Common myeloid progenitor, CD34-positive (primary cell): ENCODE measurements at regions of chr20 and their contacts with region 1.

Region 1: GRCh38 chr20:58938541-58938940 is 42.5 kb upstream of the NELFCD start:
- DNase-seq: peak; percentile 38 to 81 (median 72)
- H3K4me3 ChIP-seq: no peak overlapping the region
- H3K27ac ChIP-seq: no peak overlapping the region
- H3K4me1 ChIP-seq: peaks cover 0 to 13% (median 2%) of the 10 kb centered on the region in 4 experiments
- H3K27me3 ChIP-seq: no peaks in the 10 kb centered on the region

Region 2: GRCh38 chr20:58829531-58829941 is 109.0 kb before region 1 on chr20:
- CTCF ChIA-PET with region 1: no interaction called
- POLR2A ChIA-PET with region 1: no interaction called
- DNase-seq: no peak
- H3K4me3 ChIP-seq: no peak overlapping the region
- H3K27ac ChIP-seq: no peak overlapping the region
- H3K4me1 ChIP-seq: no peaks in the 10 kb centered on the region
- H3K27me3 ChIP-seq: peaks cover 0 to 22% (median 9%) of the 10 kb centered on the region in 5 experiments

Region 3: GRCh38 chr20:58921564-58921963 is 17.0 kb before region 1 on chr20:
- CTCF ChIA-PET with region 1: interaction called, 11 read pairs
- POLR2A ChIA-PET with region 1: no interaction called
- DNase-seq: no peak
- H3K4me3 ChIP-seq: no peak overlapping the region
- H3K27ac ChIP-seq: no peak overlapping the region
- H3K4me1 ChIP-seq: no peaks in the 10 kb centered on the region
- H3K27me3 ChIP-seq: no peaks in the 10 kb centered on the region

Region 4: GRCh38 chr20:59020938-59021551 is 82.5 kb after region 1 on chr20:
- CTCF ChIA-PET with region 1: no interaction called
- POLR2A ChIA-PET with region 1: no interaction called
- DNase-seq: peak; percentile 56 to 78 (median 62)
- H3K4me3 ChIP-seq: peak overlapping the region in 1 of 7 experiments; percentile 39
- H3K27ac ChIP-seq: peak overlapping the region in 1 of 2 experiments; percentile 71
- H3K4me1 ChIP-seq: peaks cover 9 to 42% (median 32%) of the 10 kb centered on the region in 4 experiments
- H3K27me3 ChIP-seq: no peaks in the 10 kb centered on the region